Panc1 (cell line): ENCODE measurements at regions of chr12 and their contacts with region 1.

Region 1: DNA sequence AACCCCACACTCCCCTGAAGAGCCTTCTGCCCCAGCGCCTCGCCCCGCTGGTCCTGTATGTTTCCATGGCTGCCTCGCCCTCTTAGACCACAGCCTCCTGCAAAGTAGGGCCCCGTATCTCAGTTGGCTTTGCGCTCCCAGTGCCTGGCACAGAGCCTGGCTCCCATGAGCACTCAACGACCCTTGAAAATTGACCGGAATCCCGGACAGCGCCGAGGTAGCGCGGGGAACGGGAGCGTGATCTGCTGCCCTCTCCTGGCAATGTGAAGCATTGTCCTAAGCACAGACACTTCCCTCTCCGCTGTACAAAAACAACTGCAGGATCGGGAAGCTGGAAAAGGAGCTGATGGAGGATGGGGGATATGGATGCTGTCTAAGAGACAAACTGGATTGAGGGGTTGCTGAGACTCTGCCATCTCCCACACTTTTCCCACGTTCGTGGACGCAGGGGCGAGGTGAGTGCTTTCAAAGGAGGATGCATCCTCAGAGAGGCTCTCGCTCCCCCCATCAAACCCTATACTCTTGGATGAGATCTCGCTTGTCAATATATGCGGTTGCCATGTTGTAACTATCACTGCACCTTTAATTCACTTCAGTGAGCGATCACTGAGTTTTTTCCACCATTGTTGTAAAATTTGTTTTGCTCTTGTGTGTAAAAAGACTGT is 10.7 kb upstream of the FKBP4 start:
- DNase-seq: peak; percentile 45
- ATAC-seq: peak; percentile 96
- H3K4me3 ChIP-seq: peak overlapping the region; percentile 21 to 40
- H3K27ac ChIP-seq: no peak overlapping the region
- H3K4me1 ChIP-seq: no peaks in the 10 kb centered on the region
- H3K27me3 ChIP-seq: peaks cover 6% of the 10 kb centered on the region; the same call in 1 of the 2 replicates
- CTCF ChIP-seq: peak; percentile 89

Region 2: GRCh38 chr12:2682296-2683251 is 101.5 kb before region 1 on chr12:
- CTCF ChIA-PET with region 1: no interaction called
- POLR2A ChIA-PET with region 1: no interaction called
- in situ Hi-C with region 1: no loop called
- intact Hi-C with region 1: loop called (anchors 10 kb)
- DNase-seq: no peak
- ATAC-seq: peak; percentile 57
- H3K4me3 ChIP-seq: no peak overlapping the region
- H3K27ac ChIP-seq: no peak overlapping the region
- H3K4me1 ChIP-seq: no peaks in the 10 kb centered on the region
- H3K27me3 ChIP-seq: no peaks in the 10 kb centered on the region
- CTCF ChIP-seq: peak; percentile 57

Region 3: GRCh38 chr12:2739817-2740641 is 44.0 kb before region 1 on chr12:
- CTCF ChIA-PET with region 1: interaction called, 10 read pairs
- POLR2A ChIA-PET with region 1: no interaction called
- in situ Hi-C with region 1: no loop called
- intact Hi-C with region 1: no loop called
- DNase-seq: no peak
- ATAC-seq: no peak
- H3K4me3 ChIP-seq: no peak overlapping the region
- H3K27ac ChIP-seq: no peak overlapping the region
- H3K4me1 ChIP-seq: no peaks in the 10 kb centered on the region
- H3K27me3 ChIP-seq: peaks cover 6% of the 10 kb centered on the region
- CTCF ChIP-seq: peak; percentile 78